ENCODE measurements at regions of chr2 and their contacts with region 1.

Region 1: GRCh38 chr2:30447149-30448045 is at the start of gene LCLAT1:
- DNase-seq: peak; percentile 74 to 91 (median 79)
- H3K4me3 ChIP-seq: peak within 1 kb of the TSS; percentile 30 to 96 (median 69)
- H3K27ac ChIP-seq: peak within 1 kb of the TSS in 3 of 5 donors; percentile 59 to 77 (median 61)
- H3K4me1 ChIP-seq: peaks cover 0 to 15% of the 10 kb centered on the region in 2 donors
- H3K27me3 ChIP-seq: no peaks in the 10 kb centered on the region
- CTCF ChIP-seq: peak in 1 of 6 experiments; percentile 13
- POLR2A ChIP-seq: no peak
- total RNA-seq, gene LCLAT1: 11.7 to 23.0 (median 19.2) TPM

Region 2: DNA sequence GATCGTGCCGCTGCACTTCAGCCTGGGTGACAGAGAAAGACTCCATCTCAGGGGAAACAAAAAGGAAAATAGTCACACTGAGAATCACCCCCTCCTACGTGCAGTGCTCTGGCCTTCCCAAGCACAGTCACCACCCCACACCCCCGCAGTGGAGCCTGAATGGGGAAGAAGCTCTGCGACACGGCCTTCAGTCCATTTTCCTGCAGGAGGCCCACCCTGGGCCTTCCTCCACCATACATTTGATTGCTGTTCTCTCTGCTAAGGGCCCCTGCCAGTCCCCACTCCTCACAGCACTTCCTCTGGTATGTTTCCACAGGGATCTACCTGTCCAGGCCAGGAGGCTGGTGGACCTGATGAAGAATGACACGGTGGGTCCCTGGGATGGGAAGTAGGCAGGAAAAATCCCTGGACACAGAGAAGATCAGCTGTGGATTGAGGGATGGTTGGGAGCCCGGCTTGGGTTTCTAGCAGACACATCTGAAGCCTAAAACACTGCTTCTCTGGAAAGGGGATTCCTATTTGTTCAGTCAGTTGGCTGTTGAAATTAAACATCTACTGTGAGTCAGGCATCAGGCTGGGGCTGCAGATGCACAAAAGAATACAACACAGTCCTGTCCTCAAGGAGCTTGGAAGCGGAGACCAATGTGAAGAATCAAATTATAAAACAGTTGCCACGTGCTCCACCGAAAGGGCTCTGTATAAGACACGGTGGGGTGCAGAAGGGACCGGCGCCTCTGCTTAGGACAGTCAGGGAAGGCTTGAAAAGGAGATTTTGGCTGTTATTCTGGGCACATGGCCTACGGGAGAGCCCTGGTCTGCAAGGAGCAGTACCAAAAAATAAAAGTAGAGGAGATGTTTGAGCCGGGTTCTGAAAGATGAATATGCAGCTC is 1869.4 kb before region 1 on chr2:
- intact Hi-C with region 1: no loop called
- DNase-seq: no peak
- H3K4me3 ChIP-seq: no peak overlapping the region
- H3K27ac ChIP-seq: no peak overlapping the region
- H3K4me1 ChIP-seq: no peaks in the 10 kb centered on the region
- H3K27me3 ChIP-seq: no peaks in the 10 kb centered on the region
- CTCF ChIP-seq: no peak
- POLR2A ChIP-seq: no peak

Region 3: GRCh38 chr2:30231212-30231995 is 216.0 kb before region 1 on chr2 and contains the start of gene LBH:
- intact Hi-C with region 1: loop called in 1 of 2 experiments (anchors 10 kb)
- DNase-seq: peak; percentile 60 to 87 (median 73)
- H3K4me3 ChIP-seq: peak within 1 kb of the TSS; percentile 0 to 69 (median 37)
- H3K27ac ChIP-seq: peak within 1 kb of the TSS in 4 of 5 donors; percentile 59 to 86 (median 72)
- H3K4me1 ChIP-seq: peaks cover 0 to 23% of the 10 kb centered on the region in 2 donors
- H3K27me3 ChIP-seq: no peaks in the 10 kb centered on the region
- CTCF ChIP-seq: no peak
- POLR2A ChIP-seq: peak; percentile 84 to 94
- total RNA-seq, gene LBH: 8.8 to 76.4 (median 11.6) TPM

Region 4: DNA sequence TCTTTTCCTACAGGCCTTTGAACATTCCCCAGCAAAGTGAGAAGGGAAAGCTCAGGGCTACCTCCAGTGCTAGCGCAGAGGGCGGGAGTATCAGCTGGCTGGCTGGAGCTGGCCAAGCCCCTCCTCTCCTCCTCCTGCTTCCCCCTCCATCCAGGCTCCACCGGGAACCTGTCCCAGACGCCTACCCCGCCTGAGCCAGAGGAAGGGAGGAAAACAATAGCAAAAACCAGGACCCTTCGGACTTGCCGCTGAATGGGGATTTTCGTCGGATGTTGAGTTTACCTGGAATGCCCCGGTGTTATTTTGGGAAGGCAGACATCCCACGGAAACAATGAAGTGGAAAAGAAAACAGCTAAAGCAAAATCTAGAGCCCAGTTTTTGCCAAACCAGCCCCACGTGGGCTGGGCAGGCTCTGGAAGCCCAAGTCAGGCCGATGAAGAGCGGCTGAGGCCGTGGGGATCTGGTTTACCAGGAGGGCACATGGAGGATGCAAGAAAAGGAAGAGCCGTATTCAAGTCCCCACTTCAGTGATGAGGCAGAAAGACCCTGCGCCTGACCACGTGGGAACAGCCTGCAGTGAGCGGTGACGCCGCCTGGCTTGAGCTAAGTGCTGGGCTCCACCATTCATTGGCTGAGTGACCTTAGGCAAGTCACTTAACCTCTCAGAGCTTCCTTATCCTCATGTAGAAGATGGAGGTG is 100.8 kb before region 1 on chr2:
- intact Hi-C with region 1: no loop called
- DNase-seq: peak in 2 of 7 donors; percentile 25 to 39
- H3K4me3 ChIP-seq: no peak overlapping the region
- H3K27ac ChIP-seq: no peak overlapping the region
- H3K4me1 ChIP-seq: no peaks in the 10 kb centered on the region
- H3K27me3 ChIP-seq: no peaks in the 10 kb centered on the region
- CTCF ChIP-seq: no peak
- POLR2A ChIP-seq: no peak

Measured in adrenal gland (tissue), 19 donors.